ENCODE measurements at regions of chr17 and their contacts with region 1.

Region 1: DNA sequence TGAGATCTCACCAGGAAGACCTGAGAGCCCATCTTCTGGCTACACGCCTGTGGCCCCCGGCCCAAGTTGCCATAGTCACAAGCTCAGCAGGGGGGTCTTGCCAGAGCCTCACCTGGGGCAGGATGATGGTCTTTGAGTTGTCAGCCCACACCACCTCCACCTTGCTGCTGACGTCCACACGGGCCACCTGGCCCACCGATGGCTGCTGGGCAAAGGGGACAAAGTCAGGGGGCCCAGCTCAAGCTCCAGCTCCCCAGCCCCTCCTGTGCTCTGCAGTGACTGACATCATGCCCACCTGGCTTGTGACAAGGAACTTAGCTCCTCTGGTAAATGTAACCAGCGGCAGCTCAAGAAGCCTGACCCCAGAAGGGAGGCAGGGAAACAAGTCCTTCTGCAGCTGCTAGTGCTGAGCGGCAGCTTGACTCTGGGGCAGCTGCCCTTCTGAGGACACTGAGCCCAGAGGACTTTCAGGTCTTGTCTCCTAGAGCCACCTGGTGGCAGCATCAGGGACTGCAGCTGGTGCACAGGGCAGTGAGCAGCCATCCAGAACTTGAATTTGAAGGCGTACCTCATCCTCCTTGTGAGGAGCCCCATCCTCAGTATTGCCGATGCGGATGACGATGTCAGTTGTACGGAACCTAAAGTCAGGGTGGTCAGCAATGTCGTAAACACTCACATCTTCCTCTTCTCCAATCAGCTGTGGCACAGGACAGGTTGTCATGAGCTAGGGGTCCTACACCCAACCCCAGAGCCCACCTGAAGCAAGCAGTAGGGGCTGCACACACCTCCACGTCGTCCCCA is 13.5 kb downstream of the SPHK1 start:
- DNase-seq: peak; percentile 85 to 94 (median 90)
- ATAC-seq: peak; percentile 38 to 86 (median 82)
- H3K4me3 ChIP-seq: no peak overlapping the region
- H3K27ac ChIP-seq: no peak overlapping the region
- H3K4me1 ChIP-seq: peaks cover 0 to 19% (median 5%) of the 10 kb centered on the region in 12 donors
- H3K27me3 ChIP-seq: no peaks in the 10 kb centered on the region
- CTCF ChIP-seq: peak; percentile 92 to 99 (median 98)
- POLR2A ChIP-seq: no peak

Region 2: GRCh38 chr17:76365256-76365903 is 32.5 kb before region 1 on chr17:
- intact Hi-C with region 1: loop called in 1 of 10 experiments (anchors 2 kb)
- DNase-seq: no peak
- ATAC-seq: no peak
- H3K4me3 ChIP-seq: no peak overlapping the region
- H3K27ac ChIP-seq: no peak overlapping the region
- H3K4me1 ChIP-seq: peaks cover 0 to 34% (median 15%) of the 10 kb centered on the region in 12 donors
- H3K27me3 ChIP-seq: no peaks in the 10 kb centered on the region
- CTCF ChIP-seq: peak in 11 of 12 donors; percentile 16 to 51 (median 32)
- POLR2A ChIP-seq: no peak